Pancreas (tissue), 10 donors: ENCODE measurements at regions of chr9 and their contacts with region 1.

Region 1: GRCh38 chr9:130478736-130479575 is 34.2 kb downstream of the ASS1 start:
- DNase-seq: peak in 1 of 6 donors; percentile 51
- ATAC-seq: no peak
- H3K4me3 ChIP-seq: no peak overlapping the region
- H3K27ac ChIP-seq: no peak overlapping the region
- H3K4me1 ChIP-seq: no peaks in the 10 kb centered on the region
- H3K27me3 ChIP-seq: no peaks in the 10 kb centered on the region
- CTCF ChIP-seq: no peak

Region 2: DNA sequence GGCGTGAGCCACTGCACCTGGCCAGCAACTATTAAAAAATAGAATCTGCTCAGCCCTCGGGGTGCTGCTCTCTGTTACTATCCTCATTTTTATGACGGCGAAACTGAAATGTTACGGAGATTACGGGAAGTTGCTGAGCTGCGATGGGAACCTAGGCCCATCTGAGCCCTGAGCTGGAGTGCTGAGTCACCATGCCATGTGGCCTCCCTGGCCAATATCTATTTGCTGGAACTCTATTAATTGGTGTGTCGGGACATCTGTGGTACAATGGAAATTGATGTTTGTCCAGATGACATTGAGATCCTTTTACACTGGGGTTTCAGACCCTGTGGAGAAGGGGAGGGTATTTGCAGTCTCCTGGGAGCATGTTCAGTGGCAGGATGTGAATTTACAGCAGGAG is 193.5 kb after region 1 on chr9:
- intact Hi-C with region 1: loop called in 1 of 3 experiments (anchors 10 kb)
- DNase-seq: no peak
- ATAC-seq: no peak
- H3K4me3 ChIP-seq: no peak overlapping the region
- H3K27ac ChIP-seq: no peak overlapping the region
- H3K4me1 ChIP-seq: no peaks in the 10 kb centered on the region
- H3K27me3 ChIP-seq: no peaks in the 10 kb centered on the region
- CTCF ChIP-seq: no peak